Common myeloid progenitor, CD34-positive (primary cell): ENCODE measurements at regions of chr17 and their contacts with region 1.

Region 1: DNA sequence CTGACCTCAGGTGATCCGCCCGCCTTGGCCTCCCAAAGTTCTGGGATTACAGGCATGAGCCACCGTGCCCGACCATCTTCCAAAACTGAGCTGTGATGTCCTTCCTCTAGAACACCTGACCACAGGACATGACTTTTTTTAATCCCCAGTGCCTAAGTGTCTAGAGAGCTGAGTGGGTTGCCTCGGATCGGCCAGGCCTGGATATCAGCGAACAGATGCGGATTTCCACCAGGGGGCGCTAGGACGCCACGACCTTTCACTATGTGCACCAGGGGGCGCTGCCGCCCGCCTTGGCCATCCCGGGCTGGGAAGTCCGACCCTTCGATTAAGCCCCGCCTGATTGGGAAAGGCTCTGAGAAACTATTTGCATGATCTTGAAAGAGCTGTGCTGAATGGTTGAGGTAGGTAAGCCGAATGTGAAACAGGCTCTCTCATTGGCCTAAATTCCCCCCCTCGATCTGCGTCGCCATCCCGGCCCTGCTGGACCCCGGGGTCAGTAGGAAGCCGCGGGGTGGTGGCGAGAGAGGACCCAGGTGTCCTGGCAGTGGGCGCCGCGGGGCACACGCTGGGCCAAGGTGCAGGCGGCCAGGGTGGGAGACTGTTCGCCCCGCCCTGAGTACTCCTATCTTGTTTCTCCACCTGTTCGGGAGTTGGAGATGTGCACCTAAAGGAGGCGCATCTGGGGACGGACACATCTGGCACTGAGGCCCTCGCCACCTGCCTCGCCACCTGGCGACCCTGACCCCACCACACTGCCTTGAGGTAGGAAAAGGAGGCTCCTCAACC is at the start of gene ACBD4:
- DNase-seq: peak; percentile 97 to 98 (median 97)
- H3K4me3 ChIP-seq: peak within 1 kb of the TSS; percentile 75 to 93 (median 84)
- H3K27ac ChIP-seq: peak within 1 kb of the TSS; percentile 33 to 77
- H3K4me1 ChIP-seq: peaks cover 0 to 28% (median 28%) of the 10 kb centered on the region in 4 experiments
- H3K27me3 ChIP-seq: peaks cover 0 to 1% (median 0%) of the 10 kb centered on the region in 5 experiments

Region 2: DNA sequence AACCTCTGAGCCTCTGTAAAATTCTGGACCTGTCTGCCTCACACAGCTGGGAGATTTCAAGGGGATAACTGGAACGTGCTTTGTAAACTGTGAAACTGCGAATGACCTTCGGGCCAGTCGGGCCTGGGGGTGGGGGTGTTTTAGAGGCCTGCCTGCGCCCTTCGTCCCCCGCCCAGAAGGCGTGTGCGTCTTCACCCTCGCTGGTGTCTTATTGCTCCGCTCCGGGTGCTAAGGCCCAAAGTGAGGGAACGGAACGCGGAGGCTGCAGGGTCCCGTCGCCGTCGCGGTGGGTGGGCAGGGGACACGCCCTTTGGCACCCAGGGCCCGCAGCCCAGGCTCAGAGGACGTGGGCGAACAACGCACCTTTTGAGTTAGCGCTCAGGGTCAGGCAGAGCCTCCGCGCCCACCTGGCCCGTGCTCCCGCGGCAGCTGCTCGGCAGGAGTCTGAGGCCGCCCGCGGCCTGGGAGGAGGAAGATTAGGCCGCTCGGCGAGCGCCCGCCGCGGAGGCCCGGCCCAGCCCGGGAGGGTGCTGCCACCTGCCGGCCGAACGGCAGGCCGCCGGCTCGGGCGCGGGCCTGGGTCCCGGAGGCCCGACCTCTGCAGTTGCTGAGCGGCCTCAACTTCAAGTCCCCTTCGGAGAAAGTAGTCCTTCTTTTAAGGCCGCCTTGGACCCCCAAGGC is 113.6 kb before region 1 on chr17:
- CTCF ChIA-PET with region 1: no interaction called
- POLR2A ChIA-PET with region 1: no interaction called
- DNase-seq: peak; percentile 56 to 75 (median 74)
- H3K4me3 ChIP-seq: peak overlapping the region in 5 of 7 experiments; percentile 19 to 73 (median 60)
- H3K27ac ChIP-seq: no peak overlapping the region
- H3K4me1 ChIP-seq: peaks cover 0 to 26% (median 17%) of the 10 kb centered on the region in 4 experiments
- H3K27me3 ChIP-seq: peaks cover 5 to 43% (median 27%) of the 10 kb centered on the region in 5 experiments

Region 3: DNA sequence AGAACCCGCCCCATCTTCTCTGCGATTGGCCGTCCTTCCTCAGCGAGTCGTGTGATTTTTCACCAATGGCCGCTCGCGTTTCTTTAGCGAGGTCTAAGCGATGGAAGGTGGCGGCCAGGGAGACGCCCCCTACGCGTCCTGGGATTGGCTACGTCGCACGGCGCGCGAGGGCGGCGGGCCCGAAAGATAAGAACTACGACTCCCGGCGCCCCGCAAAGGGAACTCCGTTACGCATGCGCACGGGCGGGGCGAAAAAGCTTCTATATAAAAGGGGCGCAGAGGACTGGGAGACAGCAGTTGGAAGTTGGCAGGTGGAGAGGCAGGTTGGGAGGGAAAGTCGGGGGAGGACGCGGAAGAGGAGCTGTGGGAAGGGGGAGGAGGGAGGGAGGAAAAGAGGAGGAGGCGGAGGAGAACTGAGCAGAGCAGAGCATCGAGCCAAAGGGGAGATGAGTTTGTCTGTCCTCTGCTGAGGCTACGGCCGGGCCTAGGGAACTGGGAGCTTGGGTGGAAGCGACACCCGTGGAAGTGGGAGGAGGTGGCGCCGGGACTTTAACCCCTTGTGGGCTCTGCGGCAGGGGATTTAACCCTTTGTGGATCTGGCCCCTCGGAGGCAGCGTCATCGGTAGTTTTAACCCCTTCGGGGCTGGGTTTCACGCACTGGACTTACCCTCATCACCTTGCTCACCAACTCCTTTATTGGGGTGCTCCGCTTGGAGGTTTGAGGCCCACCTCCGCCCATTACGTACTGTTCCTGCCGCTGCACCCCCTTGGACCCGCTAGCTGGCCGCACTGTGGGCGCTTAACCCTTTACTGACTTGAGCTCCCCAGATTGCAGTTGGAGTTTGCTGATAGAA is 13.0 kb after region 1 on chr17 and contains the start of gene HEXIM1:
- CTCF ChIA-PET with region 1: interaction called, 148 read pairs
- POLR2A ChIA-PET with region 1: interaction called, 34 read pairs
- DNase-seq: peak; percentile 100
- H3K4me3 ChIP-seq: peak within 1 kb of the TSS; percentile 60 to 97 (median 87)
- H3K27ac ChIP-seq: peak within 1 kb of the TSS; percentile 100
- H3K4me1 ChIP-seq: peaks cover 16 to 62% (median 47%) of the 10 kb centered on the region in 4 experiments
- H3K27me3 ChIP-seq: no peaks in the 10 kb centered on the region

Region 4: DNA sequence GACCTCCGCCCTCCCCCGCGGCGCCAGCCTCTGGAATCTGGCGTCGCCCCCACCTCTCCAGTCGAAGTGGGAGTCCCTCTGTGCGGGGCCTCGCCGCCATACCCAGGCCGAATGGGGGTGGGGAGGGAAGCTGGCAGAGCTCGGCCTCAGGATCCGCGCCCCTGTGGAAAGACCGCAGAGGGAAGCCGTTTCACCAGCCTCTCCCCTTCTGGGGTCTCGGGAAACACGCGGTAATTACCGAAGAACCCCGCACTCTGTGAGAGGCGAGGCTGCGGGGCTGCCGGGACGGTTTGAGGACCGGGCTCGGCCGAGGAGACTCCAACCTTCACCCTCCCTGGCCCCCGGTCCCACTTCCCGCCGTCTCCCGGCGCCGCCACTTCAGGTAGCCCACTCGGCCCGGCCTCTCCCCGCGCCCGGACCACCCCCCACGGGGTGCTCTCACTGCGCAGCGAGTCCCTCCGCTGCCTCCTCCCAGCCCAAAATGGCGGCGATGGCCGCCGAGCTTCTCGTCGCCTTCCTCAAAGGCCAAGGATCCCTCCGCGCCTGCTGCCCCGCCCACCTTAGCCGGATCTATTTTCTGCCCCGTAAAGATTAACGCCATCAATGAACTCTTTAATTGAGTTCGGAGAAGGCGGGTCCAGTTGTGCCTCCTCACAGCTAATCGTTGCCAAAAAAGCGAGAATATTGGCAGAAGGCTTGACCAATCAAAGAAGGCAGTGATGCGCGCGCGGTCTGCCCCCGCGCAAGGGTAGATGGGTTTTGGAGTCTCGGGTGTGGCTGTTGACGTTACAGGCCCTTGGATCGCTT is 25.8 kb after region 1 on chr17:
- CTCF ChIA-PET with region 1: interaction called, 29 read pairs
- POLR2A ChIA-PET with region 1: interaction called, 5 read pairs
- DNase-seq: peak; percentile 100
- H3K4me3 ChIP-seq: peak overlapping the region; percentile 86 to 97 (median 96)
- H3K27ac ChIP-seq: peak overlapping the region; percentile 98 to 99
- H3K4me1 ChIP-seq: peaks cover 13 to 53% (median 45%) of the 10 kb centered on the region in 4 experiments
- H3K27me3 ChIP-seq: no peaks in the 10 kb centered on the region

Region 5: GRCh38 chr17:45190503-45191255 is 55.3 kb after region 1 on chr17:
- CTCF ChIA-PET with region 1: interaction called, 16 read pairs
- POLR2A ChIA-PET with region 1: no interaction called
- DNase-seq: no peak
- H3K4me3 ChIP-seq: no peak overlapping the region
- H3K27ac ChIP-seq: no peak overlapping the region
- H3K4me1 ChIP-seq: peaks cover 0 to 4% (median under 1%) of the 10 kb centered on the region in 4 experiments
- H3K27me3 ChIP-seq: no peaks in the 10 kb centered on the region